Heart right ventricle (tissue), 16 donors: ENCODE measurements at regions of chr20 and their contacts with region 1.

Region 1: DNA sequence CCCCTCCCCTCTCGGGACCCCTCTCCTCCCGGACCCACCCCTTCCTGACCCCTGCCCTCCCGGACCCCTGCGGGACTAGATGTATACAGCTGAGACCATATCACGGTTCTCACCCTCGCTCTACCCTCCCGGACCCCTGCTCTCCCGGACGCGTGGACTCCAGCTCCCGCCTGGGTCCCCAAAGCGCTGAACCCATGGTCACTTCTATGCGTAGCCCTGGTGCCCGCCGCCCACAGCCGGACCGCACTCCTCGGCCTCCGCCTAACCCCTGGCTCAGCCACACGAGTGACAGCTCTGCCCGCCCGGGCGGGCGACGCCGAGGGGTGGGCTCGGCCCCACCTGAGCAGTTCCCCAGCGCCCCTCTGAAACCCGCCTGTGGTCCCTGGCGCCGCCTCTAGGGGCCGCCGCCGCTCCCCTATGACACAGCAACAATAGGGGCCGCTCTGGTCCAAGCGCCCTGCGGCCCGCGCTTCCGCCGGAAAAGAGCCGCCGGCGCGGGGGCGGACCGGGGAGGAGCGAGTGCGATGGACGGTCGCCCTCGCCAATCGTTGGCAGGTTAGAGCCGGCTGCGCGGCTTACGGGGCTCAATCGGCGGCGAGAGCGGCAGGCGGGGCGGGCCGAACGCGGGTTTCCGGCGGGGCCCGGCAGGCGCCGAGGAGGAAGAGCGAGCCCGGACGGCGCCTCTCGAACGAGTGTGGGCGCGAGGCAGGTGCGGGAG is at the start of gene ADRM1:
- DNase-seq: peak; percentile 95 to 97
- ATAC-seq: peak; percentile 87 to 94 (median 92)
- H3K4me3 ChIP-seq: peak within 1 kb of the TSS; percentile 79 to 98 (median 88)
- H3K27ac ChIP-seq: peak within 1 kb of the TSS; percentile 92 to 100 (median 98)
- H3K4me1 ChIP-seq: peaks cover 16 to 47% (median 30%) of the 10 kb centered on the region in 9 donors
- H3K27me3 ChIP-seq: no peaks in the 10 kb centered on the region
- CTCF ChIP-seq: peak; percentile 91 to 99 (median 97)
- total RNA-seq, gene ADRM1: 67.7 to 97.0 (median 73.2) TPM

Region 2: GRCh38 chr20:62339647-62340070 is 37.2 kb after region 1 on chr20:
- intact Hi-C with region 1: loop called in 1 of 10 experiments (anchors 5 kb)
- DNase-seq: no peak
- ATAC-seq: no peak
- H3K4me3 ChIP-seq: no peak overlapping the region
- H3K27ac ChIP-seq: no peak overlapping the region
- H3K4me1 ChIP-seq: no peaks in the 10 kb centered on the region
- H3K27me3 ChIP-seq: no peaks in the 10 kb centered on the region
- CTCF ChIP-seq: no peak

Region 3: DNA sequence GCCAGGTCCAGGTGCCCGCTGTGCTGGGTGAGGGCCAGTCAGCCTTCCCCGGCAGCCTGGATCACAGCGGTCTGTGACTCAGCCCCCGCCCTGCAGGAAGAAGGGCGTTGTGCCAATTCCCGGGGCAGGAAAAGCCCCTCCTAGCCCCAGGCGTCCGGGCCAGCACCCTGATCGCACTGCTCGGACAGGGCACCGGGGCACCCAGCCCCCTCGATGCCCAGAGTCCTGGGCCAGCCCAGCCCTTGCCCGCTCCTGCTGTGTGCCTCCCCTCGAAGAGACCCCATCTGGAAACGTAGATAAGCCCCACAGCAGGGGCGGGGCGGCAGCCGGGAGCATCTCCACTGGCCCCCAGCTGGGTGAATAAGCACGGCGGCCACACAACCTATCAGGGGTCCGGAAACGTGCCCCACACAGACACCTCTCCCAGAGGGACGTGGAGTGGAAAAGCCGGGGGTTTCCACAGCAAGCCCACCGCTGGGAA is 54.7 kb after region 1 on chr20:
- intact Hi-C with region 1: loop called in 1 of 10 experiments (anchors 5 kb)
- DNase-seq: peak; percentile 86 to 87
- ATAC-seq: peak; percentile 40 to 68 (median 52)
- H3K4me3 ChIP-seq: peak overlapping the region in 9 of 10 donors; percentile 4 to 44 (median 37)
- H3K27ac ChIP-seq: peak overlapping the region; percentile 77 to 98 (median 93)
- H3K4me1 ChIP-seq: peaks cover 68 to 95% (median 84%) of the 10 kb centered on the region in 9 donors
- H3K27me3 ChIP-seq: peaks cover 0 to 12% (median 0%) of the 10 kb centered on the region in 7 donors
- CTCF ChIP-seq: no peak

Region 4: DNA sequence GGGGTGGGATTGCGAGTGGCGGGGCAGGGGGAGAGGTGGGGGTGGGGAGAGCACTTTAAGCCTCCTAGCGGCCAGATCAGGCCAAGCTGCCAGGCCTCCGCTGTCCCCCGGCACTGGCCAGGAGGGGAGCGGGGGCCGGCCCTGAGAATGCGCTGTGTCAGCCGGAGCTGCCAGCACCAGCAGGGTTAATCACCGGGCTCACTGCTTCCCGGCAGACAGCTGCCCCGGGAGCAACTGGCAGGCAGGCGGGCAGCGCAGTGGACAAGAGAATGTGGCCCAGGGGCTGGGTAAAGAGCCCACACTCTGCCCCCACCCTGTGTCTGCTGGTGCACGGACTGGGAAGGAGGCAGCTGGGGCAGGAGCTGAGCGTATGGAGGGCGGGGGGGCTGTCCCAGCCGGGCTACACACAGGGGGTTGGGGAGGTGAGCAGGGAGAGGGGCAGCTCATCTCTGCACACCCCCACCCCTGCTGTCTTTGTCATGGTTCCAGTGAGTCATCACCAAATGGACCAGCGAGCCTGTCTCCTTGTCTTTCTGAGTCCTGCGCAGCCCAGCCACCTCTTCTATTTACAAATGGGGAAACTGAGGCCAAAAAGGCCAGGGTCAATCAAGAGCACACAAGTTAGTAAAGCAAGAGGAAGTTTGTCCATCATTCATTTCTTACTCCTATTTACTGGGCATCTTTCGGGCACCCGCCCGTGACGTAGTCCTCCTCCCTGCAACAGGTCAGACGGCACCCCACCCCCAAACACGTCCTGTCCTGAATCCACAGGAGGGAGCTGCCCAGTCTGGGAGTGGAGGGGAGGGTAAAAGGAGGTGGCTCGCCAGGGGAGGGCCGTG is 66.7 kb after region 1 on chr20:
- intact Hi-C with region 1: loop called in 1 of 10 experiments (anchors 5 kb)
- DNase-seq: peak in 1 of 2 donors; percentile 42
- ATAC-seq: peak in 2 of 8 donors; percentile 2 to 5
- H3K4me3 ChIP-seq: peak overlapping the region in 7 of 10 donors; percentile 15 to 95 (median 87)
- H3K27ac ChIP-seq: peak overlapping the region in 9 of 10 donors; percentile 21 to 99 (median 60)
- H3K4me1 ChIP-seq: peaks cover 30 to 64% (median 64%) of the 10 kb centered on the region in 9 donors
- H3K27me3 ChIP-seq: peaks cover 0 to 55% (median 0%) of the 10 kb centered on the region in 7 donors
- CTCF ChIP-seq: peak; percentile 26 to 61 (median 52)

Region 5: DNA sequence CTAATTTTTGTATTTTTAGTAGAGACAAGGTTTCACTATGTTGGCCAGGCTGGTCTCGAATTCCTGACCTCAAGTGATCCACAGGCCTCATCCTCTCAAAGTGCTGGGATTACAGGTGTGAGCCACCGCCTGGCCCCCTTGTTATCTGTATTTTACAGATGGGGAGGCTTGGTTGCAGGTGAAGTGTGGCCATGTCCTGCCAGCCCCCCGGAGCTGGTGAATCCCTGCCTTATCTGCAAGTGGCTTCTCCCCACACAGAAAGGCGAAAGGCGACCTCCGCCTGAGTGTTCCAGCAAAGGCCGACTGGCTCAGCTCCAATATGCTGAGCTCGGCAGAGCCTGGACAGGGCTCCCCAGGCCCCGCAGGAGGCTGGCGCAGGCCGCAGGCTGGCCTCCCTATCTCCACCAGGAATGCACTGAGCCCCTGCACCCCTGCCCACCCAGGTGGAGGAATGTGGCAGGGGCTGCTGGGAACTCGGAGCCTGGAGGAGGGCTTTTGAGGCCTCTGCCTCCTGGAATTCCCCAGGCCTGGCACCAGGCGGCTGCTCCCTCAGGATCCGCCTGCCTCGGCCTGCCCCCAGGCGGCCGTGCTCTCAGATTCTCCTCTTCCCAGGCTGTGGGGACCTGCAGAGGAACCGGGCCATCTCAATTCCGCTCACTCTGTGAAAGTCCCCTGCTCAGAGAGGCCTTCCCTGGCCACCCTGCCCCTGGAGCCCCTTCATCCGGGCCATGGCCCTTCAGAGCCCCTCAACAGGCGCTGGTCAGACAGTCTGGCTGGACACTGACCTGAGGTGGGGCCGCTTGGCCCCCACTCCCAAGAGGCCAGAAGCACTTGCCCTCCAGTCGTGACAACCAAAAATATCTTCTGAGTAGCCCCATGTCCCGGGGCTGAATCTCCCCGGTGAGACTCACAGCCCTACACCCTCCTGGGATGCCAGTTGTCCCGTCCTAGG is 73.9 kb after region 1 on chr20:
- intact Hi-C with region 1: loop called in 4 of 10 experiments (anchors 5 kb)
- DNase-seq: peak; percentile 52 to 62
- ATAC-seq: peak; percentile 40 to 84 (median 68)
- H3K4me3 ChIP-seq: no peak overlapping the region
- H3K27ac ChIP-seq: peak overlapping the region in 8 of 10 donors; percentile 40 to 84 (median 61)
- H3K4me1 ChIP-seq: peaks cover 6 to 69% (median 44%) of the 10 kb centered on the region in 9 donors
- H3K27me3 ChIP-seq: no peaks in the 10 kb centered on the region
- CTCF ChIP-seq: peak; percentile 10 to 63 (median 55)

Region 6: DNA sequence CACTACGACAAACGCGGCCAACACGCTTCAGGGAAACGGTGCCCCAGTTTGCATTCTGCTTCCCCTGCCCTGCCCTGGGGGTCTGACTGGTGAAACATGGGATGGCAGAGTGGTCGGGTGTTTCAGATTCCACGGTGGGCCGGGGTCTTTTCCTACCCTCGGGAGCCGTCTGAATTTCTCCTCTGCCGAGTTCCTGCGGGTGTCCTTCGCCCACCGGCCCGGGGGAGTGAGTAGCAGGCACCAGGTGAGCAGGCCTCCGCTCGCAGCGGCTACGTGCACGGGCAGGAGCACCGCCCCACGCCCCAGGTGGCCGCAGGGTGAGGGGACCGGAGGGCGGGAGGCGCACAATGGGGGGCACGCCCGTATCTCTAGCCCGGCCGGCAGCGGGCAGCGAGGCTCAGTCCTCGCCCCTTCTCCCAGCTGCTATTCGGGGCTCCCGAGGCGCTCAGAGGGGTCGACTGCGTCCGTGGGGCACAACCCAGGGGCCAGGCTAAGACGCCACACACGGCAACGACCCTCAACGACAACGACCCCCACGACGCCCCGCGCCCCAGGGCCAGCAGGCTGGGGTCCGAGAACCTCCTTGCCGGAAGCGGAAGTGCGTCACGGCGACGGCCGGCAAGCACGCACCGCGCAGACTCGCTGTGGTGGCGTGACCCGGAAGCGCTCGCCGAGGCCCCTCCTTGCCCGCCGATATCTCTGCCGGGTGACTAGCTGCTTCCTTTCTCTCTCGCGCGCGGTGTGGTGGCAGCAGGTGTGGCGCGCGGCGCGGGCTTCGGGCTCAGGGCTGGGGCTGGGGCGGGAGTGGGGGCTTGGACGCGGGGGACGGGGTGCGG is 84.1 kb after region 1 on chr20 and contains the start of gene RPS21:
- intact Hi-C with region 1: loop called in 9 of 10 experiments (anchors 1 to 5 kb)
- DNase-seq: peak; percentile 93 to 95
- ATAC-seq: peak; percentile 91 to 96 (median 95)
- H3K4me3 ChIP-seq: peak within 1 kb of the TSS; percentile 76 to 100 (median 92)
- H3K27ac ChIP-seq: peak within 1 kb of the TSS; percentile 79 to 99 (median 96)
- H3K4me1 ChIP-seq: peaks cover 9 to 47% (median 34%) of the 10 kb centered on the region in 9 donors
- H3K27me3 ChIP-seq: no peaks in the 10 kb centered on the region
- CTCF ChIP-seq: peak in 1 of 9 donors; percentile 12
- total RNA-seq, gene RPS21: 512 to 811 (median 576) TPM

Region 7: GRCh38 chr20:62494980-62495748 is 192.7 kb after region 1 on chr20:
- intact Hi-C with region 1: loop called in 2 of 10 experiments (anchors 5 to 10 kb)
- DNase-seq: no peak
- ATAC-seq: peak in 7 of 8 donors; percentile 13 to 60 (median 29)
- H3K4me3 ChIP-seq: no peak overlapping the region
- H3K27ac ChIP-seq: peak overlapping the region in 9 of 10 donors; percentile 49 to 81 (median 70)
- H3K4me1 ChIP-seq: peaks cover 5 to 46% (median 28%) of the 10 kb centered on the region in 9 donors
- H3K27me3 ChIP-seq: peaks cover 0 to 7% (median 0%) of the 10 kb centered on the region in 7 donors
- CTCF ChIP-seq: no peak